ENCODE measurements at regions of chr2 and their contacts with region 1.

Region 1: GRCh38 chr2:239267288-239267951 is 133.4 kb downstream of the HDAC4 start:
- DNase-seq: peak; percentile 80 to 97 (median 90)
- ATAC-seq: peak; percentile 74
- H3K4me3 ChIP-seq: peak overlapping the region; percentile 68
- H3K4me3 Mint-ChIP-seq: peak overlapping the region; percentile 91
- H3K27ac ChIP-seq: peak overlapping the region; percentile 73 to 83
- H3K27ac Mint-ChIP-seq: peak overlapping the region; percentile 95
- H3K4me1 ChIP-seq: peaks cover 80% of the 10 kb centered on the region
- H3K4me1 Mint-ChIP-seq: peaks cover 81% of the 10 kb centered on the region
- H3K27me3 ChIP-seq: no peaks in the 10 kb centered on the region
- H3K27me3 Mint-ChIP-seq: no peaks in the 10 kb centered on the region
- CTCF ChIP-seq: peak; percentile 69

Region 2: GRCh38 chr2:239143858-239144718 is 123.3 kb before region 1 on chr2:
- CTCF ChIA-PET with region 1: interaction called, 7 read pairs
- POLR2A ChIA-PET with region 1: interaction called, 4 read pairs
- intact Hi-C with region 1: loop called in 1 of 2 experiments (anchors 1 kb)
- DNase-seq: peak in 9 of 14 experiments; percentile 10 to 63 (median 26)
- ATAC-seq: peak; percentile 74
- H3K4me3 ChIP-seq: no peak overlapping the region
- H3K4me3 Mint-ChIP-seq: no peak overlapping the region
- H3K27ac ChIP-seq: no peak overlapping the region
- H3K27ac Mint-ChIP-seq: no peak overlapping the region
- H3K4me1 ChIP-seq: no peaks in the 10 kb centered on the region
- H3K4me1 Mint-ChIP-seq: peaks cover 7% of the 10 kb centered on the region
- H3K27me3 ChIP-seq: no peaks in the 10 kb centered on the region
- H3K27me3 Mint-ChIP-seq: no peaks in the 10 kb centered on the region
- CTCF ChIP-seq: peak; percentile 51

Region 3: GRCh38 chr2:239230318-239231052 is 36.9 kb before region 1 on chr2:
- CTCF ChIA-PET with region 1: interaction called, 5 read pairs
- POLR2A ChIA-PET with region 1: interaction called, 7 read pairs
- intact Hi-C with region 1: loop called in 1 of 2 experiments (anchors 2 kb)
- DNase-seq: peak in 4 of 14 experiments; percentile 23 to 58 (median 56)
- ATAC-seq: peak; percentile 63
- H3K4me3 ChIP-seq: peak overlapping the region; percentile 42
- H3K4me3 Mint-ChIP-seq: peak overlapping the region; percentile 42
- H3K27ac ChIP-seq: peak overlapping the region; percentile 37 to 47
- H3K27ac Mint-ChIP-seq: peak overlapping the region; percentile 87
- H3K4me1 ChIP-seq: peaks cover 73% of the 10 kb centered on the region
- H3K4me1 Mint-ChIP-seq: peaks cover 82% of the 10 kb centered on the region
- H3K27me3 ChIP-seq: no peaks in the 10 kb centered on the region
- H3K27me3 Mint-ChIP-seq: no peaks in the 10 kb centered on the region
- CTCF ChIP-seq: no peak

Region 4: GRCh38 chr2:239318790-239319661 is 51.6 kb after region 1 on chr2:
- CTCF ChIA-PET with region 1: interaction called, 20 read pairs
- POLR2A ChIA-PET with region 1: interaction called, 13 read pairs
- intact Hi-C with region 1: no loop called
- DNase-seq: peak in 5 of 14 experiments; percentile 32 to 61 (median 57)
- ATAC-seq: no peak
- H3K4me3 ChIP-seq: peak overlapping the region; percentile 49
- H3K4me3 Mint-ChIP-seq: peak overlapping the region; percentile 90
- H3K27ac ChIP-seq: peak overlapping the region; percentile 37 to 61
- H3K27ac Mint-ChIP-seq: peak overlapping the region; percentile 97
- H3K4me1 ChIP-seq: peaks cover 69% of the 10 kb centered on the region
- H3K4me1 Mint-ChIP-seq: peaks cover 70% of the 10 kb centered on the region
- H3K27me3 ChIP-seq: no peaks in the 10 kb centered on the region
- H3K27me3 Mint-ChIP-seq: no peaks in the 10 kb centered on the region
- CTCF ChIP-seq: no peak

Region 5: DNA sequence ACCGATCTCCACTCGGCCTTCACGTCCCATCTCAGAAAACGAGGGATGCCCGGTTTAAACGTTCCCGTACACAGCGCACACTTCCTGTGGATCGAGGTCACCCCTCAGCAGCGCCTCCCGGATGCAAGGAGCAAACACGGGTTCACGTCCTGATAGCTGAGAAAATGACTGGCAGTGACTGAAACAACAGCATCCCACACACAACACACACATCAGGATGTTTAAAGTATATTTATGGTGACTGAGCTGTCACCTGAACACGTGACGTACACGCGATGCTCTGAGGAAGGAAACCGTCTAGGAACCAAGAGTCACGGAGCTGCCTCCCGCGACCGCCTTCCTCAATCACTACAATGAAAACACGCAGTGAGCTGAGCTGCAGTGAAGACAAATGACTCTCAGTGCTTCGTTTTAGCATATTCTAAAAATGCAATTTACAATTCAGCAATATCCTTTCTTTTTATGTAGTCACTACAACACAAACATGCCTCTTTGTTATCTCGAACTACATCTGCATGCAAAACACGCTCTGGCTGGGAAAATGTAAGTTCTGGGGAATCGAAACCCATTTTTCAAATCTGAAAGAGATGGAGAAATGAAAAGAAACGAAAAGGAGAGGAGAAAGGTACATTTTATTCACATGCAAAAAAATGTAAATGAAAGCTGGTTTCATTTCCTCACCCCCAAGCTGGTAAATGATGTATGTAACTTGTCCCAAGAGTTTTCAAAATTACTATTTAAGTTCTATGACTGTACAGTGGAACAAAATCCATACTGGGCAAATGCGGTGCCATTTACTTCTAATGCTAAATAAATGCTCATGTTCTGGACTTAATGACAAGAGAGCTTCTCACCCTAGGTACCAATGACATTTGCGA is 113.7 kb after region 1 on chr2:
- CTCF ChIA-PET with region 1: interaction called, 19 read pairs
- POLR2A ChIA-PET with region 1: interaction called, 21 read pairs
- intact Hi-C with region 1: loop called (anchors 1 to 5 kb)
- DNase-seq: peak; percentile 56 to 89 (median 70)
- ATAC-seq: peak; percentile 93
- H3K4me3 ChIP-seq: peak overlapping the region; percentile 51
- H3K4me3 Mint-ChIP-seq: peak overlapping the region; percentile 86
- H3K27ac ChIP-seq: peak overlapping the region; percentile 61 to 65
- H3K27ac Mint-ChIP-seq: peak overlapping the region; percentile 92
- H3K4me1 ChIP-seq: peaks cover 17% of the 10 kb centered on the region
- H3K4me1 Mint-ChIP-seq: peaks cover 23% of the 10 kb centered on the region
- H3K27me3 ChIP-seq: no peaks in the 10 kb centered on the region
- H3K27me3 Mint-ChIP-seq: no peaks in the 10 kb centered on the region
- CTCF ChIP-seq: no peak

Region 6: GRCh38 chr2:239882331-239882732 is 614.9 kb after region 1 on chr2:
- CTCF ChIA-PET with region 1: interaction called, 4 read pairs
- POLR2A ChIA-PET with region 1: no interaction called
- intact Hi-C with region 1: loop called (anchors 1 to 2 kb)
- DNase-seq: peak; percentile 33 to 76 (median 58)
- ATAC-seq: peak; percentile 72
- H3K4me3 ChIP-seq: no peak overlapping the region
- H3K4me3 Mint-ChIP-seq: no peak overlapping the region
- H3K27ac ChIP-seq: no peak overlapping the region
- H3K27ac Mint-ChIP-seq: no peak overlapping the region
- H3K4me1 ChIP-seq: peaks cover 11% of the 10 kb centered on the region
- H3K4me1 Mint-ChIP-seq: peaks cover 10% of the 10 kb centered on the region
- H3K27me3 ChIP-seq: no peaks in the 10 kb centered on the region
- H3K27me3 Mint-ChIP-seq: peaks cover 4% of the 10 kb centered on the region
- CTCF ChIP-seq: peak; percentile 72